Stomach (tissue), 19 donors: ENCODE measurements at regions of chr1 and their contacts with region 1.

Region 1: DNA sequence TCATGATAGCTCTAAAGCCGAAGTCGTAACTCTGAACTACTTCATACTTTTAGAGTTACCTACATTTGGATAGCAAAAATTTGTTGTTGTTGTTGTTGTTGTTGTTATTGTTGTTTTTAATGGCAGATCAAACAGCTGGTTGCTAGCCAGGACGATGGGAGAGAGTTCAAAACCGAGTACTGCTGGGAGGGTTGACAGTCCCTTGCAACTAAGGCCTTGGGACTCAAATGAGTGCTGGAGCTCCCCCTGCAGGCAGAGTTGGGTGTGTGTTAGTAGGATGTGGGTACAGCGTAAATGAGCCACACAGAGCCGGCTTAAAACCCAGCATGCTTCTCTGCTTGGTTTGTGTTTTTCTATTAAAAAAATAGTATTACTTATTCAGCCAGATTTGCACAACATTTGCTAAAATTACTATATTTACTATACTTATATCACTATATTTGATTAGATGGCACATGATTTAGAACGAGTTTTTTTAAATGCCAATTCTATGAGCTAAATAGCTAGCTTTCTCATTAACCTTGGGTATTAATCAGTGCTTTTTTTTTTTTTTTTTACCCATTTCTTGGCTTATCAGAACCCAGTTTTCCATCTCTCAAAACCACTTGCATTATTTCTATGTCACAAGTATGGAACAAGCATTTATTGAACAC is 129.2 kb upstream of the SYT6 start:
- DNase-seq: peak; percentile 88 to 96
- H3K4me3 ChIP-seq: no peak overlapping the region
- H3K27ac ChIP-seq: no peak overlapping the region
- H3K4me1 ChIP-seq: no peaks in the 10 kb centered on the region
- H3K27me3 ChIP-seq: no peaks in the 10 kb centered on the region
- CTCF ChIP-seq: peak in 5 of 7 experiments; percentile 62 to 79 (median 75)
- EP300 ChIP-seq: no peak
- POLR2A ChIP-seq: no peak

Region 2: GRCh38 chr1:113830039-113830438 is 452.8 kb before region 1 on chr1:
- intact Hi-C with region 1: loop called (anchors 5 kb)
- DNase-seq: no peak
- H3K4me3 ChIP-seq: no peak overlapping the region
- H3K27ac ChIP-seq: no peak overlapping the region
- H3K4me1 ChIP-seq: no peaks in the 10 kb centered on the region
- H3K27me3 ChIP-seq: no peaks in the 10 kb centered on the region
- CTCF ChIP-seq: no peak
- EP300 ChIP-seq: no peak
- POLR2A ChIP-seq: no peak

Region 3: GRCh38 chr1:113978863-113979702 is 303.8 kb before region 1 on chr1 and contains the start of gene OLFML3:
- intact Hi-C with region 1: loop called (anchors 5 kb)
- DNase-seq: peak; percentile 86 to 96
- H3K4me3 ChIP-seq: peak within 1 kb of the TSS; percentile 38 to 41 (median 39)
- H3K27ac ChIP-seq: peak within 1 kb of the TSS; percentile 70 to 85 (median 82)
- H3K4me1 ChIP-seq: peaks cover 30 to 96% (median 57%) of the 10 kb centered on the region in 4 donors
- H3K27me3 ChIP-seq: no peaks in the 10 kb centered on the region
- CTCF ChIP-seq: peak in 5 of 7 experiments; percentile 42 to 75 (median 61)
- EP300 ChIP-seq: peak; percentile 27
- POLR2A ChIP-seq: no peak
- total RNA-seq, gene OLFML3: 2.9 to 84.3 (median 32.7) TPM